Activated CD4-positive, alpha-beta T cell treated with anti-CD3 and anti-CD28 coated beads for 36 hours (primary cell): ENCODE measurements at regions of chr19 and their contacts with region 1.

Region 1: DNA sequence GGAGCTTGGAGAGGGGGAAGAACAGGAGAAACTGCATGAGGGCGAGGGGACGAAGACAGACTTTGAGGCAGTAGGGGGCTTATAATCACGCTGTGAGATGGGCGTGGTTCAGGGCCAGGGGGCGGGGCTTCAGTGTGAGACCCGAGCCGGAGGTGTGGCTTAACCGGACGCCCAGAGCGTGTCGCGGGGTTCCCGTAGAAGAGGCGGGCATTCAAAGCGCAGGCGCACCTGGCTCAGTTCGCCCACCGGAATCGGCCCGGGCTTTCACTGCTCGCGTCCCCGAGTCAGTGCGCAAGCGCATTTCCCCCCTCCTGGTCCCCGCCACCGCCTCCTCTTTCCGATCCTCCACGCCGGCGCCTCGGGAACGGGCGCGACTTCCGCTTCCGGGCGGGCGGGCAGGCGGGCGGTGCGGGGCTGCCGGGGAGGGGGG is 225 bp upstream of the ZNF865 start:
- DNase-seq: peak; percentile 100
- ATAC-seq: peak; percentile 87
- H3K4me3 Mint-ChIP-seq: peak overlapping the region; percentile 88
- H3K27ac Mint-ChIP-seq: peak overlapping the region; percentile 96
- H3K4me1 Mint-ChIP-seq: peaks cover 57% of the 10 kb centered on the region
- H3K27me3 Mint-ChIP-seq: no peaks in the 10 kb centered on the region

Region 2: GRCh38 chr19:54137086-54137921 is 1467.9 kb before region 1 on chr19 and contains the start of gene CNOT3:
- CTCF ChIA-PET with region 1: no interaction called
- POLR2A ChIA-PET with region 1: no interaction called
- intact Hi-C with region 1: loop called in 1 of 2 experiments (anchors 1 kb)
- DNase-seq: peak; percentile 99
- ATAC-seq: peak; percentile 86
- H3K4me3 Mint-ChIP-seq: peak within 1 kb of the TSS; percentile 83
- H3K27ac Mint-ChIP-seq: peak within 1 kb of the TSS; percentile 91
- H3K4me1 Mint-ChIP-seq: peaks cover 44% of the 10 kb centered on the region
- H3K27me3 Mint-ChIP-seq: no peaks in the 10 kb centered on the region
- total RNA-seq, gene CNOT3: 61.0 to 93.8 TPM

Region 3: DNA sequence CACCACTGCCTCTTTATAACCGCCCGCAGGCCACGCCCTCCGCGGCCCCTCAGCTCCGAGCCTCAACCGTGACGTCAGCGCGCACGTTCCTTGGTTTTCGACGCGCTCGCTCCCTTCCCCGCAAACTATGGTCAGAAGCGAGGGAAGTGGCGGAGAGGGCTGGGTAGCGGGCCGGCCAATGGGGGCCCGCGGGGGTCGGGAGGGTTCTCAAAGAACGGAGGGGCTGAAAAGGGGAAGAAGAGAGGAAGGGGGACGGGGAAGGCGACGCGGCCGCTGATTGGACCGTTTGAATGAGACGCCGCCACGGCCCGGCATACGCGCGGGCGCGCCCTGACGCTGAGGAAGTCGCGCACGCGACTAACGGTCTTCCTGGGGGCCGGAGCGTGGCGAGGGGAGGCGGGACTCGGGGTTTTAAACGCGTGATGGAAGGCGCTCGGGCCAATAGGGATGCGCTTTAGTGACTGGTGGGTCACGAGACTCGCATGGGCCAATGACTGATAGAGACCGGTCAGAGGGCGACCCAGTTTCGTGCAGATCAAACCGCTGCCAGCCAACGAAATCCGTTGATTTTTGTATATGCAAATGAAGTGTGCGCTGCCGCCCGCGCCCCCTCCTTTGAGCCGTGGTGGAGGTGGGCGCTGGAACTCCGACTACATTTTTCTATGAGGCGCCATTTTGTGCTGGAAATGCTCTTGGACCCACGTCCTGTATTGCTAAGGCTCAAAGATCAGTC is 197.3 kb before region 1 on chr19:
- CTCF ChIA-PET with region 1: interaction called, 3 read pairs
- POLR2A ChIA-PET with region 1: no interaction called
- intact Hi-C with region 1: loop called in 1 of 2 experiments (anchors 1 kb)
- DNase-seq: peak; percentile 98
- ATAC-seq: peak; percentile 96
- H3K4me3 Mint-ChIP-seq: peak overlapping the region; percentile 90
- H3K27ac Mint-ChIP-seq: peak overlapping the region; percentile 96
- H3K4me1 Mint-ChIP-seq: peaks cover 22% of the 10 kb centered on the region
- H3K27me3 Mint-ChIP-seq: no peaks in the 10 kb centered on the region

Region 4: DNA sequence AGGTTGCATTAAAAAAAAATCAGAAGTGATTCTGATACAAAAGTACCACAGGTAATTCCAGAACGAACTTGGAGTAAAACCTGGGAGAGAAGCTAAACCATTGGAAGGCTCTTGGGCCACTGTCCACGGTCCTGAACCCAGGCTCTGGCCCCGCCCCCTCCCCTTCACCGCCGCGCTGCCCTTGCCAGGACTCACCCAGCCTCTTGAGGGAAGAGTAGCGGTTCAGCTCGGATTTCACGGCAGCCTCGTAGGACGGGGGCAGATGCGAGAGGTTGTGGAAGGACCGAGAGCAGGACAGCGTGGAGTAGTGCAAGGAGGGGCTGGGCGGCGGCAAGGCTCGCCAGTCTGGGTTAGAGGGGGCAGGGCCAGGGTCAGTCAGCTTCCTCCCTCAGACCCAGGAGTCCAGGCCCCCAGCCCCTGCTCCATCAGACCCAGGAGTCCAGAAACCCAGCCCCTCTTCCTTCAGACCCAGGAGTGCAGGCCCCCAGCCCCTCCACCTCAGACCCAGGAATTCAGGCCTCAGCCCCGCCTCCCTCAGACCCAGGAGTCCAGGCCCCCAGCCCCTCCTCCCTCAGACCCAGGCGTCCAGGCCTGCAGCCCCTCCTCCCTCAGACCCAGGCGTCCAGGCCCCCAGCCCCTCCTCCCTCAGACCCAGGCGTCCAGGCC is 167.7 kb before region 1 on chr19:
- CTCF ChIA-PET with region 1: no interaction called
- POLR2A ChIA-PET with region 1: no interaction called
- intact Hi-C with region 1: no loop called
- DNase-seq: peak; percentile 58
- ATAC-seq: no peak
- H3K4me3 Mint-ChIP-seq: no peak overlapping the region
- H3K27ac Mint-ChIP-seq: no peak overlapping the region
- H3K4me1 Mint-ChIP-seq: peaks cover 13% of the 10 kb centered on the region
- H3K27me3 Mint-ChIP-seq: peaks cover 42% of the 10 kb centered on the region

Region 5: GRCh38 chr19:55549500-55550320 is 55.5 kb before region 1 on chr19:
- CTCF ChIA-PET with region 1: no interaction called
- POLR2A ChIA-PET with region 1: no interaction called
- intact Hi-C with region 1: no loop called
- DNase-seq: no peak
- ATAC-seq: no peak
- H3K4me3 Mint-ChIP-seq: no peak overlapping the region
- H3K27ac Mint-ChIP-seq: no peak overlapping the region
- H3K4me1 Mint-ChIP-seq: no peaks in the 10 kb centered on the region
- H3K27me3 Mint-ChIP-seq: peaks cover 20% of the 10 kb centered on the region

Region 6: DNA sequence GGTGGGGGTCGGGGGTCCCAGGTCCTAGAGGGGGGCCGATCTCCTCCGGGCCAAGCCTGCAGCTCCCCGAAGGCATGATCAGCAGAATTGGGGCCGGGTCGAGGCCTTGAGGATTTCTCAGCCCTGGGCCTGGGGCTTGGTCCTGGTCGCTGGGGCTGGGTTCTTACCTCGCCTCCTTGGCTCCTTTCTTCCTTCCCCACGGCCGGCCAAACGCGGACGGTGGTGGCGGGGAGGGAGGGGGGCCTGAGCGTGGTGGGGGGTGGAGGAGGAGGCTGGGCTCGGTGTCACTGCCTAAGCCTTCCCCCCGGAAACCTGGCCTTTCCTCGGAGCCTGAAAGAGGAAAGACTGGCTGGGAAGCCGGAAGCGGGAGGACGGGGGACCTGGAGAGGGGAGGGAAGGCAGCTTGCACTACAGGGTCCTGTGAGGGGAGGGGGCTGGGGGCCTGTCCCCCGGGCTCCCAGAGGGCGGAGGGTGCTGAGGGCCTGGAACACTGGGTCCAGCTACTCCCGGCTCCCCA is 24.5 kb before region 1 on chr19 and contains the start of gene ZNF579:
- CTCF ChIA-PET with region 1: interaction called, 4 read pairs
- POLR2A ChIA-PET with region 1: no interaction called
- intact Hi-C with region 1: loop called in 1 of 2 experiments (anchors 1 kb)
- DNase-seq: peak; percentile 89
- ATAC-seq: peak; percentile 79
- H3K4me3 Mint-ChIP-seq: peak within 1 kb of the TSS; percentile 83
- H3K27ac Mint-ChIP-seq: peak within 1 kb of the TSS; percentile 78
- H3K4me1 Mint-ChIP-seq: peaks cover 23% of the 10 kb centered on the region
- H3K27me3 Mint-ChIP-seq: no peaks in the 10 kb centered on the region
- total RNA-seq, gene ZNF579: 7.2 to 7.5 TPM

Region 7: DNA sequence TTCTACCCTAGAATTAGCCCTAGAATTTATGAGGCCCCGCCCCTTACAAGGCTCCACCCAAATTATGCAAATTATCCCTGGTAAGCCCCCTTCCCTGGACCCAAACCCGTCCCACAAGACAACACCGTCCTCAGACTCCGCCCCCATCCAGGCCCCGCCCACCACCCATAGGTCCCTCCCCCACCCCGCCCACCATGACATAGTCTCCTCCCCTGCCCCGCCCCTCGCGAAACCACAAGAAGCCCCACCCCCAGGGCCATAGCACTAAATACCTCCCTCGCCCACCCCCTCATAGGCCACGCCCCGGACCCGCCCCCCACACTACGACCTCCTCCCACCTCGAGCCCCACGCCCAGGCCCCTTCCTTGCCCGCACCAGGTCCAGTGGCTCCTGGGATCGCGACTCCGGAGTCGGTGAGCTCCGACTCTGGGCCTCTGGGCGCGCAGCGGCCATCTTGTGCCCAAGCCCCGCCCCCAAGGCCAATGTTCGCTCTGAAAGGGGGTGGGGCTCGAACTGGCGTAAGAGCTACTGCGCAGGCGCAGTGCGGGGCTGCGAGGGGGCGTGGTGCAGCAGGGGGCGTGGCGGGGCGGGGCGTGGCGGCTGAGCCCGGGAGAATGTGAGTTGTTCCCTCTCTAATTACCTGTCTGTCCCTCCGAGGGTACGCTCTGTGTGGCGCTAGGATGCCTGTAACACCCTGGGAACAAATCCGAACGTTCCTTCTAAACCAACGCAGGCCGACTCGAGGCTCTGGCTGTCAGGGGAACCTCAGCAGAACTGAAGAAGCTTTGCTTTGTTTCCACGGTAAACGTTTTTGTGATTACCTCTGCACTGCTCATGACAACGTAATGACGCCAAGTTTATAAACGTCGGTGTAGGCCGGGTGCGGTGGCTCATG is 19.1 kb after region 1 on chr19 and contains the start of gene ZNF784:
- CTCF ChIA-PET with region 1: interaction called, 20 read pairs
- POLR2A ChIA-PET with region 1: interaction called, 4 read pairs
- intact Hi-C with region 1: loop called (anchors 1 to 2 kb)
- DNase-seq: peak; percentile 97
- ATAC-seq: peak; percentile 70
- H3K4me3 Mint-ChIP-seq: peak within 1 kb of the TSS; percentile 79
- H3K27ac Mint-ChIP-seq: peak within 1 kb of the TSS; percentile 85
- H3K4me1 Mint-ChIP-seq: peaks cover 53% of the 10 kb centered on the region
- H3K27me3 Mint-ChIP-seq: no peaks in the 10 kb centered on the region
- total RNA-seq, gene ZNF784: 3.2 to 4.3 TPM

Region 8: DNA sequence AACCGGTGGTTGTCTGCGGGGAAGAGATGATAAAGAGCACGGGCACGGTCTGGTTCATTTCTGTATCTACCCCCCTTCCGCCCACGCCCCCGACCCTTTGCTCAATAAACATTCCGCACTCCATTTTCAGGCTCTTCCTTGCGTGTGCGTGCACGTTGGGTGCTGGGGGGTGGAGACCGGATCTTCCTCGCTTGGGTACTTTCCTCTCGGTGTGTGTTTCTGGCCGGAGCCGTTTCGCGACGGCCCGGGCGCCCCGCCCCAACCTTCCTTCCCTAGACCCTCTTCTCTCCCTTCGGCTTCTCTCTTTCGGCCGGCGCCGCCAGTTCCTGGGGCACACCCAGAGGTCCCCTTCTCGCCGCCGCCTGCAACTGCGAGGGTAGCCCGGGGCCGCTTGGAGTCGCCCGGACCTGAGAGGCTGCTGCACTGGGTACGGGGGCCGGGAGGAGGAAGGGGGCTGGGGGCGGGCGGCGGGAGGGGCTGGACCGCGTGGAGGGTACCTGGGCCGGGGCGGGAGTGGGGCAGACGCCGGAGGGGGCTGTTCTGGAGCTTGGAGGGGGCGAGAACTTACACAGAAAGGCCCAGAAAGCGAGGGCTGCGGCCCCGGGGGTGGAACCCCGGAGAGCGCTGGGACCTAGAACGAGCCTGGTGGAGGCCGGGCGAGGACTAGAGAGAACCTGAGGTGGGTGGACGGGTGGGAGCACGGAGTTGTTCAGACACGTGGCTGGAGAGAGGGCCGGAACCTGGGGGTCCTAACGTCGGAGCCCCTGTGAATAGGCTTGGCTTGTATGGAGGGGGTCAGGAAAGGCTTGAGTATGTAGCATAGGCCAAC is 38.3 kb after region 1 on chr19 and contains the start of gene ZNF581:
- CTCF ChIA-PET with region 1: interaction called, 4 read pairs
- POLR2A ChIA-PET with region 1: no interaction called
- intact Hi-C with region 1: loop called (anchors 1 to 5 kb)
- DNase-seq: peak; percentile 91
- ATAC-seq: peak; percentile 55
- H3K4me3 Mint-ChIP-seq: peak within 1 kb of the TSS; percentile 93
- H3K27ac Mint-ChIP-seq: peak within 1 kb of the TSS; percentile 99
- H3K4me1 Mint-ChIP-seq: peaks cover 44% of the 10 kb centered on the region
- H3K27me3 Mint-ChIP-seq: no peaks in the 10 kb centered on the region
- total RNA-seq, gene ZNF581: 18.9 to 26.9 TPM

Region 9: DNA sequence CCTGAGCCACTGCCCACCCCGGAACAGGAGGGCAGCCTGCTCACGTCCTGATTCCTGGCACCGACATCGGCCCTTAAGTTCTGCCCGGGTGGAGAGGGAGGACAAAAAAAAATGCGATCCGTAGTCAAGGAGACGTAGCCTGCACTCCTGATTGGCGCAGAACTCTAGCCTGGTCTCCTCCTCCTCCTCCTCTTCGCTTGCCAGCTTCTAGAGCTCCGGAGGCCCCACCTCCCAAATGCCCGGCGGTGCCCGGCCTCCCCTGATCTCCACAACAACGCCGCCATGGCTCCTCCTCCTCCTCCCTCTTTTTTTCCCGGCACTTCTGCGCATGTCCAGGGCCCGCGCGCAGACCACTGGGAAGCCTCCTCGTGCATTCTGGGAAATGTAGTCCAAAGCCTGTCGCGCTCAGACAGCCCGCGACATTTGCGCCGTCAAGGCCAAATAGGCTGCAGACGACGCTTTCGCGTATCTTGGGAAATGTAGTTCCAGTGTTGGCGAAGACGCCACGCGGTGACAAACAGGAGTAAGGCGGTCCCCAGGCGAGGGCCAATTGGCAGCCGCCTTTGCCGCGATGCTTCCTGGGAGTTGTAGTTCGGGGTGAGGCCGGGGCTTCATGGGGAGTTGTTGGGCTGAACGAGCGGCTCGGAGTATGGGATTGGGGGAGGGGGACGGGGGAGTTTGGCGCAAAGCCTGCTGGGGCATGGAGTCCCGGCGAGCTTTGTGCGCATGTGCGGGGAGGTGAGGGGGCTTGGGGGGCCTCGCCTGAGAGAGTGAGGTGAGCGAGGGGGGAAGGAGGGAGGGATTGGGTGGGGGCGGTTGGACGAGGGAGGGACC is 535.6 kb after region 1 on chr19 and contains the start of gene ZNF444:
- CTCF ChIA-PET with region 1: no interaction called
- POLR2A ChIA-PET with region 1: no interaction called
- intact Hi-C with region 1: loop called in 1 of 2 experiments (anchors 1 kb)
- DNase-seq: peak; percentile 99
- ATAC-seq: peak; percentile 90
- H3K4me3 Mint-ChIP-seq: peak within 1 kb of the TSS; percentile 89
- H3K27ac Mint-ChIP-seq: peak within 1 kb of the TSS; percentile 94
- H3K4me1 Mint-ChIP-seq: peaks cover 31% of the 10 kb centered on the region
- H3K27me3 Mint-ChIP-seq: no peaks in the 10 kb centered on the region
- total RNA-seq, gene ZNF444: 29.2 to 32.2 TPM